ENCODE measurements at regions of chr1 and their contacts with region 1.

Region 1: GRCh38 chr1:23367791-23368561 is 1.7 kb downstream of the ZNF436 start:
- DNase-seq: peak; percentile 98
- H3K4me3 Mint-ChIP-seq: peak overlapping the region; percentile 95
- H3K27ac Mint-ChIP-seq: peak overlapping the region; percentile 96
- H3K4me1 Mint-ChIP-seq: peaks cover 27% of the 10 kb centered on the region
- H3K27me3 Mint-ChIP-seq: no peaks in the 10 kb centered on the region

Region 2: GRCh38 chr1:23330846-23331245 is 37.1 kb before region 1 on chr1:
- intact Hi-C with region 1: loop called (anchors 5 kb)
- DNase-seq: no peak
- H3K4me3 Mint-ChIP-seq: no peak overlapping the region
- H3K27ac Mint-ChIP-seq: no peak overlapping the region
- H3K4me1 Mint-ChIP-seq: peaks cover 26% of the 10 kb centered on the region
- H3K27me3 Mint-ChIP-seq: no peaks in the 10 kb centered on the region

Region 3: GRCh38 chr1:23403735-23404486 is 35.9 kb after region 1 on chr1:
- intact Hi-C with region 1: loop called (anchors 1 kb)
- DNase-seq: peak; percentile 72
- H3K4me3 Mint-ChIP-seq: no peak overlapping the region
- H3K27ac Mint-ChIP-seq: no peak overlapping the region
- H3K4me1 Mint-ChIP-seq: peaks cover 12% of the 10 kb centered on the region
- H3K27me3 Mint-ChIP-seq: no peaks in the 10 kb centered on the region

Region 4: DNA sequence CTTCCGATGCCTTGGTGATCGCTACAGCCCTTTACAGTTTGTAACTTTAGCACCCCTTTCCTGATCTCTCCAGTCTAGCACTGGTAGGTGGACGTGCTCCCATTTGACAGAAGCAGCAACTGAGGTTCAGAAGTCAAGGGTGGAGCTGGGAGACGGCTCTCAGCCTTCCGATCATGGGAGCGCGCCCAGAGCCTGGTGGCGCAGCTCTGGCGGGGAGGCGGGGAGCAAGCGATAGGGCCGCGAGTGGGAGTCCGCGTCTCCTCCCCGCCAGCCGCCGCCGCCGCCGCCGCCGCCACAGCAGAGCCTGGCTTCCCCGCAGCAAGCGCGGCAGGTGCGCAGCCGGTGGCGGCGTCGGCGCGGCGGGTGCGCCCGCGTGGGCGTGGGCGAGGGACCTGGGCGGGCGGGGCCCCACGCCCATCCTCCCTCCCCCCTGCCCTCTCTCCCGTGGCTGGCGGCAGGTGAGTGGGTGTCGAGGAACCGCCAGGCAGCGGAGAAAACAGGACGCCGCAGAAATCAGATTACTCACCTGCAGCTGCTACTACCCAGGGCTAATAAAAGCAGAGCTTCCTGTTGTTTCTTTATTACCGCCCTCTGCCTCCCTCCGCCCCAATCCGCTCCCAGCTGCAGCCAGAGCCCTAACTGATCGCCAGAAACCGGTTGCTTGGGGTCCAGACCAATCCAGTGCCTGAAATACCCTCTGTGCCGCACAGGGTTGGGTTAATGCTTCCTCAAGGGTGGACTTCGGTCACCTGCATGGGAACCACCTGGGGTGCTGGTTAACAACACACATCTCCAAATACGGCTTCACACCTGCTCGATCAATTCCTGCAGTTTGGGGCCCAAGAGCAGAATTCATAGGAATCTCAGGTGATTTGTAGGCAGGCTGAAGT is 251.6 kb after region 1 on chr1:
- intact Hi-C with region 1: loop called (anchors 2 kb)
- DNase-seq: peak; percentile 55
- H3K4me3 Mint-ChIP-seq: peak overlapping the region; percentile 67
- H3K27ac Mint-ChIP-seq: peak overlapping the region; percentile 69
- H3K4me1 Mint-ChIP-seq: peaks cover 72% of the 10 kb centered on the region
- H3K27me3 Mint-ChIP-seq: no peaks in the 10 kb centered on the region

Region 5: GRCh38 chr1:23777979-23778814 is 410.2 kb after region 1 on chr1 and contains the start of gene PITHD1:
- intact Hi-C with region 1: loop called (anchors 1 kb)
- DNase-seq: peak; percentile 80
- H3K4me3 Mint-ChIP-seq: peak within 1 kb of the TSS; percentile 95
- H3K27ac Mint-ChIP-seq: peak within 1 kb of the TSS; percentile 94
- H3K4me1 Mint-ChIP-seq: peaks cover 43% of the 10 kb centered on the region
- H3K27me3 Mint-ChIP-seq: no peaks in the 10 kb centered on the region
- total RNA-seq, gene PITHD1: 83.2 and 83.4 TPM in 2 replicates

Region 6: DNA sequence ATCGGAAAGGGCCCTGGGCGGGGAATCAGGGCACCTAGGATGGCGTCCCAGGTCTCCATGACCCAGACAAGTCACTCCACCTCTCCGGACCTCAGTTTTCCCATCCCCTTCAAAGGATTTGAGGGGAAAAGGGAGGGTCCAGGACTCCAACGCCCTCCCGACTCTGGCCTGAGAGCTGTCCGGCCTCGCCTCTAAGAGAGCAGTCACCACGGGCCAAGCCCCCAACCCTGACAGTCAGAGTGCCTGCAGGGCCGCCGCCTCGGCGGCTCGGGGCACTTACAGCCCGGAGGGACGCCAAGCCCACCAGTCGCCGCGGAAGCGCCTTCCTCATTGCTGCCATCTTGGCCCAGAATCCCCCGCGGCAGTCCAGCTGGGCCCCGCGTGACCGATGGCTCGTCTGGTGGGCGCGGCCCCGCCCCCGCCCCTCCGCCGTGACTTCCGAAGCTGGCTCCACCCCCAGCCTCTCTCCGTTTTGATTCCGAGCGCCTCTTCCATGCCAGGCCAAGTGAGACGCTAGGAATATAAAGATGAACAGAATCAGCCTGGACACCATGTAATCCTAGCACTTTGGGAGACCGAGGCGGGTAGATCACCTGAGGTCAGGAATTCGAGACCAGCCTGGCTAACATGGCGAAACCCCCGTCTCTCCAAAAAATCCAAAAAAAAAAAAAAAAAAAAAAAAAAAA is 457.2 kb after region 1 on chr1 and contains the start of gene HMGCL:
- intact Hi-C with region 1: loop called (anchors 1 kb)
- DNase-seq: peak; percentile 81
- H3K4me3 Mint-ChIP-seq: peak within 1 kb of the TSS; percentile 94
- H3K27ac Mint-ChIP-seq: peak within 1 kb of the TSS; percentile 89
- H3K4me1 Mint-ChIP-seq: peaks cover 15% of the 10 kb centered on the region
- H3K27me3 Mint-ChIP-seq: no peaks in the 10 kb centered on the region
- total RNA-seq, gene HMGCL: 18.5 and 19.9 TPM in 2 replicates

Measured in activated T-helper 1 cell treated with anti-CD3 and anti-CD28 coated beads, Interleukin-12 subunit alpha, Interleukin-12 subunit beta, Interleukin-2, Interleukin-4 antibody, amounts not matched to agents 30 ng/mL and 10 ng/mL and 1 ng/mL, durations not matched to agents 14 hours and 24 hours and 36 hours (primary cell).